GM12878 (cell line): ENCODE measurements at regions of chr15 and their contacts with region 1.

Region 1: DNA sequence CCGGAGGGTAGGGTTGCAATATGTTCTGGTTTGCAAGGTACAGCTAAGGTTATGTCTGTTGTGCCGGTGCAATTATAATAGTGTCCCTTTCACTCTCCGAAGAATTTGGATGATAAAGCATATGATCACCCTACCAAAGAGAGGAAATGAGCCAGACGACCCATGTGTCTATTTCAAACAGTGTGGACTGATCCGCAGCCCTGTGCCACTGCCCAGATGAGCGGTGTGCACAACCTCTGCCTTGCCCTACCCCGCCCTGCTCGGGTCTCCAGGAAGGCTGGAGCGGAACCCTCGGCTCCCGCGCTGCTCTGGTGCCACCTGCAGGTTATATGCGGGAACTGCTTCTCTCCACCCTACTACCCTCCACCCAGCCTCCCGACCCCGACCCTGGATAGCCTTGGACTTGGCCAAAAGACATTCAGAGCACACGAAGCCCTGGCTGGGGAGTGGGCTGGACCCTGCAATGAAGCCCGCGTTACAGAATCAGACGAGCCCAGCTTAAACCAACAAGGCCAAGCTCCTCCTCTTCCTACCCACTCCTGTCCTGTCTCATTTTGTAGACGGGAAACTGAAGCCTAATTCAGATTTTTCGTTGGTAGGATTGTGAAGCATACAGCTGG is 68.4 kb upstream of the CHRNB4 start:
- DNase-seq: no peak
- ATAC-seq: peak; percentile 99
- H3K4me3 ChIP-seq: no peak overlapping the region
- H3K27ac ChIP-seq: no peak overlapping the region
- H3K4me1 ChIP-seq: no peaks in the 10 kb centered on the region
- H3K27me3 ChIP-seq: 0 out of 4 replicates have a peak, but pooled peaks cover 2% of the 10 kb centered on the region in 2 experiments
- CTCF ChIP-seq: peak; percentile 82 to 96 (median 85)
- EP300 ChIP-seq: no peak
- POLR2A ChIP-seq: no peak
- RAD21 ChIP-seq: peak; percentile 91

Region 2: DNA sequence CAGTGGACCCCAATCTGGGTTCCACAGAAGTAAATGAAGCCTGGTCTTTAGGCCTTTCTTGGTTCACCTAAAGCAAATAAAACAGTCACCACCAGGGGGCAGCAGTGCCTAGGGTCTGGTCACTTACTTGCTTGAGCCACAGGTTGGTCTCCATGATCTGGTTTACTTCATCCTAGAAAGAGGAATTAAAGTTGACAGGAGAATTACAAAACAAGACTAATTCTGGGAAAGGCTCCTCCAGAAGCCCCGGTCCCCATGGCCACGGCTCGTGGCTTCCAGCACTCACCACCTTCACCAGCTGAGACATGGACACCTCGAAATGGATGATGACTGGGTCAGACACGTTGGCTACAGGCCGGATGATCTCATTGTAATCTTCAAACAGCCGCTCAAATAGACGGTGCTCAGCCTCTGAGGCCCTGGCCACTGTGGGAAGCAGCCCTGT is 90.9 kb before region 1 on chr15:
- CTCF ChIA-PET with region 1: interaction called, 11 read pairs
- POLR2A ChIA-PET with region 1: no interaction called
- RAD21 ChIA-PET with region 1: interaction called, 7 read pairs
- SMC1A ChIA-PET with region 1: interaction called, 3 read pairs
- in situ Hi-C with region 1: loop called (anchors 5 kb)
- intact Hi-C with region 1: loop called (anchors 1 kb)
- DNase-seq: peak; percentile 37
- ATAC-seq: peak; percentile 92
- H3K4me3 ChIP-seq: no peak overlapping the region
- H3K27ac ChIP-seq: no peak overlapping the region
- H3K4me1 ChIP-seq: no peaks in the 10 kb centered on the region
- H3K27me3 ChIP-seq: peaks cover 5 to 7% of the 10 kb centered on the region in 2 experiments
- CTCF ChIP-seq: peak; percentile 77 to 83 (median 80)
- EP300 ChIP-seq: no peak
- POLR2A ChIP-seq: no peak
- RAD21 ChIP-seq: peak; percentile 84

Region 3: DNA sequence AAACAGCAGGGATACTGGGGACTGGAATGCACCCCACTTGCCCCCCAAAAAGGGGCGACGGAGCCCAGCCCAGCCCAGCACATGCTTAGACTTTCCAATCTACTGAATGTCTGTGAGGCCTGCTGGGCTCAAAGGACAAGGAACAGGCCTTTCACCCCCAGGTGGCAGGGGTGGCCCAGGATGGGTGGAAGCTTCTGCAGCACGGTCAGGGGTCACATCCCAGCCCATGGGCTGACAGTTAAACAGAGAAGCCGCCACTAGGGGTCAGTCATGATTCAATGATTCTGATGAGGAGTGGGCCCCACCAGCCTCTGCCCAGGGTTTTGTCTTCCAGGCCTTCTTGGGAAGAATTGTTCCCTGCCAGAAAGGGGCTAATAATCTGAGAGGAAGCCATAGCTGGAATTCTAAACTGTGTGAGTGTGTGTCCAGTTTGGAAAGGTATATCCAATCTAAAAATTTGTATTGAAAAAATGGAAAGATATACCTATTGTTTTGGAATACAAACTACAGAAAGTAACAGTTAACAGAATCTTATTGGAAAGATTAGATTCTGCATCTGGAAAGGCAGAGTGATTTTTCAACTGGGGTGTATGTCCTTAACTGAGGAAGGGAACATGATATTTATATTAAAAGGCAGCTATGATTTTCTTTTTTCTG is 70.6 kb before region 1 on chr15:
- CTCF ChIA-PET with region 1: interaction called, 95 read pairs
- POLR2A ChIA-PET with region 1: no interaction called
- RAD21 ChIA-PET with region 1: interaction called, 19 read pairs
- SMC1A ChIA-PET with region 1: interaction called, 24 read pairs
- in situ Hi-C with region 1: no loop called
- intact Hi-C with region 1: loop called (anchors 1 kb)
- DNase-seq: no peak
- ATAC-seq: peak; percentile 84
- H3K4me3 ChIP-seq: no peak overlapping the region
- H3K27ac ChIP-seq: no peak overlapping the region
- H3K4me1 ChIP-seq: no peaks in the 10 kb centered on the region
- H3K27me3 ChIP-seq: peaks cover 3 to 4% of the 10 kb centered on the region in 2 experiments; a peak in 3 of 4 replicates
- CTCF ChIP-seq: peak; percentile 53 to 56 (median 53); a peak in 5 of 6 replicates
- EP300 ChIP-seq: no peak
- POLR2A ChIP-seq: no peak
- RAD21 ChIP-seq: peak; percentile 60